ENCODE measurements at regions of chr5 and their contacts with region 1.

Region 1: DNA sequence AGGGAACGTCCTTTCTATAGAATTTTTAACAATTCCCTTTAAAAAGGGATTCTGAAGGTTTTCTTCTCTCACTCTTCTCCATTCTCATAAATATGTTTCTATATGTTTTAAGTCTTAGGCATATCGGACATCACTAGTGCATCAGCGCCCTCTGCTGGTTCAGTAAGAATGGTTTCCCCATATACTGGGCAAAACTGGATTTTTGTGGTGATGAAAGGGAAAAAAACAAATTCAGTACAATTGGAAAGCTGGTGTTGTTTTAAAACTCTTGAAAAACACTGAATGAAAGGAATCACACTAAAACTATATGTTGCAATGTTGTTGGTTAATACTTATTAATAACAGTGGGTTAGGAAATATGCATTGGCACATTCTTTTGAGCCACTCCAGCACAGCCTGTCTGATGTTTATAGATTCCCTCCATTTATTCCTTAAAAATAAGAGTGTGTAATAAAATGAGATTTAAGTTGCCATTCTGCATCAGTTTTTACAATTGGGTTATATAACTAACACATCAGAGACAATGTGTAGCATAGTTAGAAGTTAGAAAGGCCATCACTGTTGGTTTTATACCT is 15.8 kb downstream of the CWC27 start:
- DNase-seq: peak; percentile 62
- ATAC-seq: peak; percentile 82
- H3K4me3 ChIP-seq: no peak overlapping the region
- H3K27ac ChIP-seq: no peak overlapping the region
- H3K4me1 ChIP-seq: 0 out of 4 replicates have a peak, but pooled peaks cover 0 to 2% of the 10 kb centered on the region in 2 experiments
- H3K27me3 ChIP-seq: no peaks in the 10 kb centered on the region
- CTCF ChIP-seq: peak; percentile 70 to 95 (median 72)
- POLR2A ChIP-seq: no peak
- RAD21 ChIP-seq: peak; percentile 81

Region 2: DNA sequence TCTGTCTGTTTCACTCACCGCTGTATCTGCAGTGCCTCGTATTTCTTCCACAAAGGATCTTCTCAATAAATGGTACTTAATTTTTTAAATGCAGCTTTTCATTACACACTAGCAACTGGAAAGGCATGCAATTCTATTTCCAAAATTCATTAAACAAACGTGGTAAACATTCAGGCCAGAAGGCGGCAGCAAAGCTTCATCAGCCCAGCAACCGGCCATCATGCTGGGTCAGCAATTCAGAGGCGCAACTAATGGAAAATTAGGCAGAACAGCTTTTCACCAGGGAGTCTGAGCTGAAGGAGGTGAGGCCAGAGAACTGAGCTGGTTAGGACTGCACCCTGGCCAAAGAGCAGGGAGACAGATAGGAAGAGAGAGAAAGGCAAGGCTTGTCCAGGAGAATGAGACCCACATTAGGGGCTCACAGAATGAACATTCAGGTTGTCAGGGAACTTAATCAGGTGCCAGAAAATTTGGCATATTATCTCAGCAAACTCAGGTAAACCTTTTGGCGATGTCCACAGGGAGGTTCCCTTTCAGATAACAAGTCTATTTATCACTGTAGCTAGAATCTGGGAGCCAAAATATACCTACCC is 636.6 kb before region 1 on chr5:
- CTCF ChIA-PET with region 1: no interaction called
- POLR2A ChIA-PET with region 1: no interaction called
- RAD21 ChIA-PET with region 1: no interaction called
- intact Hi-C with region 1: loop called (anchors 10 kb)
- DNase-seq: peak; percentile 8
- ATAC-seq: no peak
- H3K4me3 ChIP-seq: no peak overlapping the region
- H3K27ac ChIP-seq: no peak overlapping the region
- H3K4me1 ChIP-seq: no peaks in the 10 kb centered on the region
- H3K27me3 ChIP-seq: no peaks in the 10 kb centered on the region
- CTCF ChIP-seq: peak; percentile 25 to 65 (median 31); a peak in 5 of 6 replicates
- POLR2A ChIP-seq: no peak
- RAD21 ChIP-seq: peak; percentile 59

Region 3: DNA sequence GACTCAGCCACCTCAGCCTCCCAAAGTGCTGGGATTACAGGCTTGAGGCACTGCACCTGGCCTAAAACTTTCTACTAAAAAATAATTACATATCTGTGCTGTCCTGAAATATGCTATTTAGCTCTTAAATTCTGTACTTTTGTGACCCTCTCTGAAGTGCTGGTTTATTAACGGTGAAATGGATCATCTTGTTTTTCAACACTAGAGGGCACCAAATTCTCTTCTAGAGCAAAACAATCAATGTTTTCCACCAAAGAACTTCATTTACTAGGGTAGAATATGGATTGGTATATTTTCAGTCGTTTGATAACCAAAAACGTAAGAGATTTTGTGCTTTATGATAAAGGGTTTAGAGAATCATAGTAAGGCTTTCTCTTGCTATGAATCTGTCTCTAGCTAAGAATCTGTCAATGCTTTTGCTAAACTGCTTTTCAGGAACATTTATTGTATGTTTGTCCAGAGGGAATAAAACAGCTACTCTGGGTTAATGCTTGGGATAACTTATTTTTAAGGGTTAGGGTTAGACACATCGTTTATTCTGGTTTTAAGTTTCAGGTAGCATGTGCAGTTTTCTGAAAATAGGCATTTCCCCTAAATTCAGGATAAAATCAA is 555.3 kb before region 1 on chr5:
- CTCF ChIA-PET with region 1: no interaction called
- POLR2A ChIA-PET with region 1: no interaction called
- RAD21 ChIA-PET with region 1: no interaction called
- intact Hi-C with region 1: loop called (anchors 1 kb)
- DNase-seq: no peak
- ATAC-seq: peak; percentile 27; the same call in 1 of the 2 replicates
- H3K4me3 ChIP-seq: no peak overlapping the region
- H3K27ac ChIP-seq: no peak overlapping the region
- H3K4me1 ChIP-seq: no peaks in the 10 kb centered on the region
- H3K27me3 ChIP-seq: no peaks in the 10 kb centered on the region
- CTCF ChIP-seq: peak; percentile 23 to 74 (median 51); a peak in 3 of 6 replicates
- POLR2A ChIP-seq: no peak
- RAD21 ChIP-seq: peak; percentile 54

Region 4: DNA sequence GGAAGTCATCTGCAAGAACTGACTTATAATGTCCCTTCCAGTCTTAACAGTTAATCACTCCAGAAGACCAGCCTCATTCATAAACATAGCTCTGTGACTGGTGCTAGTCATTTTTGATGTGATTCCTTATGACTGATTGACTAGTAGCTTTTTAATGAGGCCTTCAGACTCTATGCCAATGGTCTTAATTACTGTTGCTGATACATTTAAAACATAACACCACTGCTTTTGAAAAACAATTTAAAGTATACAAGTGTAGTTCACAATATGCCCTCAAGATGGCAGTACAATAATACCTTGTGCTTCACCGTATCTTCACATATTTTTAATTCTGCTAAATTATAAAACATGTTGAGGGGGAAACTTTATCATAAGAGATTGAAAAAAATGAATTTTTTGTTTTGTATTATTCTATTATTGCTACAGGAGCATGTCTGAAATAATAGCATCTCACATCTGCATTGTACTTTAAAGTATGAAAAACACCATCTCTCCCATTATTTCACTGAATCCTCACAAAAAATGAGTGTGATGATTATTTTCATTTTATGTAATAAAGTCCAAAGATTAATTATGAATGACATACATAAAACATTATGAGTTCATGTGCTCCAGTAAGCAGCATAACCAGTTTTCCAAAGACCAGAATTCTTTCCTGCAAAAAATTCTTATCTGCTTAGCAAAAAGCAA is 149.4 kb before region 1 on chr5:
- CTCF ChIA-PET with region 1: interaction called, 5 read pairs
- POLR2A ChIA-PET with region 1: no interaction called
- RAD21 ChIA-PET with region 1: no interaction called
- intact Hi-C with region 1: loop called (anchors 1 kb)
- DNase-seq: peak; percentile 16
- ATAC-seq: no peak; the same call in 1 of the 2 replicates
- H3K4me3 ChIP-seq: no peak overlapping the region
- H3K27ac ChIP-seq: no peak overlapping the region
- H3K4me1 ChIP-seq: no peaks in the 10 kb centered on the region
- H3K27me3 ChIP-seq: peaks cover 15% of the 10 kb centered on the region; the same call in 1 of the 2 replicates
- CTCF ChIP-seq: peak; percentile 45 to 85 (median 62)
- POLR2A ChIP-seq: no peak
- RAD21 ChIP-seq: peak; percentile 82

Region 5: GRCh38 chr5:64900618-64901017 is 116.1 kb after region 1 on chr5:
- CTCF ChIA-PET with region 1: no interaction called
- POLR2A ChIA-PET with region 1: no interaction called
- RAD21 ChIA-PET with region 1: no interaction called
- intact Hi-C with region 1: no loop called
- DNase-seq: no peak
- ATAC-seq: no peak
- H3K4me3 ChIP-seq: no peak overlapping the region
- H3K27ac ChIP-seq: no peak overlapping the region
- H3K4me1 ChIP-seq: no peaks in the 10 kb centered on the region
- H3K27me3 ChIP-seq: no peaks in the 10 kb centered on the region
- CTCF ChIP-seq: no peak
- POLR2A ChIP-seq: no peak
- RAD21 ChIP-seq: no peak